ENCODE measurements at regions of chr14 and their contacts with region 1.

Region 1: DNA sequence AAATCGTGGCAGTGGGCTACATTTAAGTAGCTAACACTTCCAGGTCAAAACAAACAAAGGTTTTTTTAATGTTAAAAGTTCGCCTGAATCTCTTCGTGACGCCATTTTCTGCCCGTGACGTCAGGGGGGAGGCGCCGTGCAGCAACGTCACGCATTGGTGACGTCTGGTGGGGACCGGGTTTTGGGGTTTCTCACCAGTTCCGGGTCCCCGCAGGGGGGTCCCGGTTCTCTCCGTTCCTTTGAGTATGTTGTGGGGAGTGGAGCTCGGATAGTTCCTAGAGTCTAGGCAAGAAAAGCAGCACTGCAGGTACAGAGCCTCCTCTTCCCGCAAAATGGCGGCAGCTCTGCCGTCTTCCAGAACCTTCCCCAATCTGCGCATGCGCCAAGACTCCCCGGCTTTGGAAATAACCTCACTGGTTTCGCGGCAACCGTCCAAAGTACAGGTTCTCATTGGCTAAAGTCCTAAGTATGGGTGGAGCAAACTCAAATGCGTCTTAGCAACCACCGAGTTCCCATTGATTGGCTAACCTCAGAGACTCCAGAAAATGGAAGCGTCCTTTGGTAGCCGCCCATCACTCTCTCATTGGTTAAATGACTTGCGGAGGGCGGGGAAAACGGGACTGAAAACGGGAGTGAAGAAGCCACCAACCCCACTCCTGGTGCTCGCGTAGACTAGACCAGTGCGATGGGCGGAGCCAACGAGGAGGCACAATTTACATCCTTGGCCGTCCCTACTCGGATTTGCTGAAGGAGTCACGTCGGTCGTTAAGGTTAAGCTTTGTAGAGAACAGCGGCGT is at the start of gene RBM23:
- DNase-seq: peak; percentile 98 to 100 (median 100)
- ATAC-seq: peak; percentile 91
- H3K4me3 ChIP-seq: peak within 1 kb of the TSS; percentile 59 to 88
- H3K4me3 Mint-ChIP-seq: peak within 1 kb of the TSS; percentile 91
- H3K27ac ChIP-seq: peak within 1 kb of the TSS; percentile 100
- H3K27ac Mint-ChIP-seq: peak within 1 kb of the TSS; percentile 99
- H3K4me1 ChIP-seq: peaks cover 30% of the 10 kb centered on the region
- H3K4me1 Mint-ChIP-seq: peaks cover 42% of the 10 kb centered on the region
- H3K27me3 ChIP-seq: no peaks in the 10 kb centered on the region
- H3K27me3 Mint-ChIP-seq: no peaks in the 10 kb centered on the region
- CTCF ChIP-seq: no peak
- total RNA-seq, gene RBM23: 135 to 141 TPM

Region 2: DNA sequence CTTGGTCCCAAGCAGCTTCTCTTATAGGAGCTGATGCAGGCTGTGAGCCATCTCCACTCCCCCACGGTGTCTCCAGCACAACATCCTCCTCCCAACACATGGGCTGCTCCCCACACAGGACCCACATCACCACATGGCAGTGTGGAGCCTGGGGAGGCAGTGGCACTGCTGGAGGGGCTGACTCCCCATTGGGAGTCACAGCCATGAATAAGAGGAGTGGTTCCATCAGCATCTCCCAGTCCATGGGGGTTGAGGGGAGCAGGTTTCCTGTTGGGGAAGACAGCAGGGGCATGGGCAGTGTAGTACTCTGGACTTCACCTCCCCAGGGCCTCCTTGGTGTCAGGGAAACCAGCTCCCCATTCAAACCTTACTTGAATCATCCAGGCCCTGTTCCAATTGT is 193.0 kb before region 1 on chr14:
- CTCF ChIA-PET with region 1: no interaction called
- POLR2A ChIA-PET with region 1: no interaction called
- intact Hi-C with region 1: no loop called
- DNase-seq: no peak
- ATAC-seq: no peak
- H3K4me3 ChIP-seq: no peak overlapping the region
- H3K4me3 Mint-ChIP-seq: no peak overlapping the region
- H3K27ac ChIP-seq: no peak overlapping the region
- H3K27ac Mint-ChIP-seq: no peak overlapping the region
- H3K4me1 ChIP-seq: no peaks in the 10 kb centered on the region
- H3K4me1 Mint-ChIP-seq: no peaks in the 10 kb centered on the region
- H3K27me3 ChIP-seq: no peaks in the 10 kb centered on the region
- H3K27me3 Mint-ChIP-seq: peaks cover 2% of the 10 kb centered on the region
- CTCF ChIP-seq: no peak

Region 3: DNA sequence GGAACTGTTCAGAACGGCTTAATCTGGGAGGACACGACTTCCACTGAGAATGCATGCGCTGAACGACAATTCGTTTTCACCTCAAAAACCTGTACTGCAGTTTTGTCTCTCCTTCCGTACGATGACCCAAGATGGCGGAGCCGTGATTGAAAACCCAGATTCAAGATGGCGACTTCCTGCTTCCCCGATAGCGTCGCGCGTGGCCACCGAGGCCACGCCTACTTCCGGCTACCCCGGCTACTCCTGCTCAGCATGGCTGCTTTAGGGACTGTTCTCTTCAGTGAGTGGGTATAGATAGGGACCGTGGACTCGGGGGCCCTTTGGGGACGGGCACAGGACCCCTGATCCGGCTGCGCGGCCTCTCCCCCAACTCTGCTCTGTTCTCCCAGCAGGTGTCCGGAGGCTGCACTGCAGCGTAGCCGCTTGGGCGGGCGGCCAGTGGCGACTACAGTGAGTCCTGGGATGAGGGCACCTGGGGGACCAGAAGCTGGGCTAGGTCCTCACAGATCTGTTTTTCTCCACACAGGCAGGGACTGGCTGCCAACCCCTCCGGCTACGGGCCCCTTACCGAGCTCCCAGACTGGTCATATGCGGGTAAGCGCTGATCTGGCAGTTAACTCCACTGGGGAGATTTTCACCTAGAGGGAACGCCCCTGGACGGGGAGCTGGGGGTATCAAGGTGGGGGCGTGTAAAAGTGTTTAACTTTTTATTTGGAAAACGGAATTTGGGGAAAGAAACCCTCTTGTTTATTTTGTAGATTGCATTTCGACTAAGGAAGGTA is 89.2 kb before region 1 on chr14 and contains the start of gene MRPL52:
- CTCF ChIA-PET with region 1: interaction called, 5 read pairs
- POLR2A ChIA-PET with region 1: no interaction called
- intact Hi-C with region 1: loop called in 1 of 2 experiments (anchors 5 kb)
- DNase-seq: peak; percentile 81 to 97 (median 90)
- ATAC-seq: peak; percentile 95
- H3K4me3 ChIP-seq: peak within 1 kb of the TSS; percentile 89 to 91
- H3K4me3 Mint-ChIP-seq: peak within 1 kb of the TSS; percentile 92
- H3K27ac ChIP-seq: peak within 1 kb of the TSS; percentile 69 to 90
- H3K27ac Mint-ChIP-seq: peak within 1 kb of the TSS; percentile 96
- H3K4me1 ChIP-seq: peaks cover 13% of the 10 kb centered on the region
- H3K4me1 Mint-ChIP-seq: peaks cover 31% of the 10 kb centered on the region
- H3K27me3 ChIP-seq: peaks cover 0 to 5% of the 10 kb centered on the region in 2 experiments
- H3K27me3 Mint-ChIP-seq: peaks cover 7% of the 10 kb centered on the region
- CTCF ChIP-seq: no peak
- total RNA-seq, gene MRPL52: 22.3 to 25.7 TPM

Region 4: DNA sequence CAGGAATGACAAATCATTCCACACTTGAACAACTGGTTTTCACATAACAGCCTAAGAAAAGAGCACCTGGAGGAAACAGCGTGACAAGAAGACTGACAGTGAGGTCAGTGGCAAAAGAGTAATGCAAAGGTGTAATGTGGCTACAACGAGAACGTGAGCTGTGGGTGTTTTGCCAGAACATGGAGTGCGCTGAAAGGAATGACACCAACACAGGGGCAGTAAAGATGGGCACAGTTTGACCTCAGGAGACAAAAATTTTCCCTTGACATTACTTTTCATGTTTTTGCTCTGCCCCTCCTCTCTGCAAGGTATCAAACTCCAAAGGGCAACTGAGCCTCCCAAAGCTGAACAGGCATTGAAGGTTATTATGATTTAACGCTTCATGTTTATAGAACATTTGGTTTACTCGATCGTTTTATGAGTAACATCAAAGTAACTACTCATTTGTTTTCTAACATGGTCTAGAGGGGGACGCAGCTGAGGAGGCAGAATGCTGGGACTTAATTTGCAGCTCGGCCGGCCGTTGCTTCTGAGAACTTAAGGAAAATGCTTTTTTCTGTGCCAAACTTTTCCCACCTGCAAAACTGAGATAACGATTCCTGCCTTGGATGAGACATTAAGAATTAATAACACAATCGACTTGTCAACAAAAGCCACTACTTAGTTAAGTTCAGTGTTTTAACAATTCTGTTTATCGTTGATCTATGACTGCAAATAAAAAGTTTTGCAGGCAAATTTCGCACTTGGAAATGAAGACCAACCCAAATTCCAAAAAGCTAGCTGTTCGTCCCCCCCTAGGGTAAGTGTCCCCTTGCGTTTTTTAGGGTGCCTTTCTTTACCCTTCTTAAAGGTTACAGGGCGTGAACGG is 36.9 kb after region 1 on chr14:
- CTCF ChIA-PET with region 1: interaction called, 3 read pairs
- POLR2A ChIA-PET with region 1: no interaction called
- intact Hi-C with region 1: loop called in 1 of 2 experiments (anchors 2 kb)
- DNase-seq: no peak
- ATAC-seq: no peak
- H3K4me3 ChIP-seq: peak overlapping the region; percentile 79 to 95
- H3K4me3 Mint-ChIP-seq: peak overlapping the region; percentile 90
- H3K27ac ChIP-seq: peak overlapping the region; percentile 69 to 84
- H3K27ac Mint-ChIP-seq: peak overlapping the region; percentile 91
- H3K4me1 ChIP-seq: peaks cover 16% of the 10 kb centered on the region
- H3K4me1 Mint-ChIP-seq: peaks cover 16% of the 10 kb centered on the region
- H3K27me3 ChIP-seq: no peaks in the 10 kb centered on the region
- H3K27me3 Mint-ChIP-seq: no peaks in the 10 kb centered on the region
- CTCF ChIP-seq: no peak

Region 5: GRCh38 chr14:23034483-23035302 is 115.7 kb after region 1 on chr14 and contains the start of gene PSMB5:
- CTCF ChIA-PET with region 1: no interaction called
- POLR2A ChIA-PET with region 1: no interaction called
- intact Hi-C with region 1: loop called (anchors 1 to 2 kb)
- DNase-seq: peak; percentile 74 to 97 (median 87)
- ATAC-seq: peak; percentile 91
- H3K4me3 ChIP-seq: peak within 1 kb of the TSS; percentile 67 to 71
- H3K4me3 Mint-ChIP-seq: peak within 1 kb of the TSS; percentile 90
- H3K27ac ChIP-seq: peak within 1 kb of the TSS; percentile 75 to 97
- H3K27ac Mint-ChIP-seq: peak within 1 kb of the TSS; percentile 98
- H3K4me1 ChIP-seq: peaks cover 21% of the 10 kb centered on the region
- H3K4me1 Mint-ChIP-seq: peaks cover 34% of the 10 kb centered on the region
- H3K27me3 ChIP-seq: no peaks in the 10 kb centered on the region
- H3K27me3 Mint-ChIP-seq: no peaks in the 10 kb centered on the region
- CTCF ChIP-seq: no peak
- total RNA-seq, gene PSMB5: 18.6 to 20.2 TPM